GM12878 (cell line): ENCODE measurements at regions of chr14 and their contacts with region 1.

Region 1: DNA sequence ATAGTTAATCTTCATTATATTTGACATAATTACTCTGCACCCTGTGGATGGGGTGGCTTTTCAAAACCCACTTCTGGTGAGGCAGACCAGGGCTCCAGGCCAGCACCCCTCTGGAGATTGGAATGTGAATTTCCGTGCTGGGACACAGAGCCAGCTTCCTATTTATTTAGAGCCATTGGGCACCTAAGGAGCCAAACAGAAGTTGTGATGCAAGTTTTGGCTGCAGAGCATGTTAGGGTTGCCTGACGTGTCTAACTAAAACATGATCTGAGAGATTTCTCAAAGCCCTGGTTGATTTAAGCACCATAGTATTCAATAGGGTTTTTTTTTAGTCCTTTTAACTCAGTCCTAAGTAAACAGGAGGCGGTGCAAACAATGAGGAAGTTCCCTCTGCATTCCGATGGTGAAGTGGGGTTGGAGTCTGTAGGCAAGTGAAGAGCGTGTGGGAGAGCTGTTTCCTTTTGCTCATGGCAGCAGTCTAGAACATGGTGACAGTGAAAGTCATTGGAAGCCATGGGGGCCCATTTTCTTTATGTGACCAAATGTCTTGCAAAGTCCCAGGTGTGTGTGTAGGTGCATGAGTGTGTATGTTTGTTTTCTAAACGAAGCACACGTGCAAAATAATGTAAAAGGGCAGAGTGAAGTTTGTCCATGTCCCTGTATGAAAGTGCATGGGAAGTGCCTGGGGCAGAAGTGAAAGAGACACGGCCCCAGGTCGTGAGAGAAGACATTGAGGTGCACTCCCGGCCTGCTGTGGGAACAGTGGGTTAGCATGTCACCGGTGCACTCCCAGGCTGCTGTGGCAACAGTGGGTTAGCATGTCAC is 117.7 kb downstream of the PRKCH start:
- DNase-seq: peak; percentile 90
- ATAC-seq: peak; percentile 74
- H3K4me3 ChIP-seq: peak overlapping the region; percentile 54
- H3K27ac ChIP-seq: peak overlapping the region; percentile 93
- H3K4me1 ChIP-seq: peaks cover 39% of the 10 kb centered on the region
- H3K27me3 ChIP-seq: no peaks in the 10 kb centered on the region
- CTCF ChIP-seq: no peak
- EP300 ChIP-seq: peak in 1 of 2 experiments; percentile 59; a peak in 1 of 4 replicates
- POLR2A ChIP-seq: no peak; the same call in 1 of the 2 replicates
- RAD21 ChIP-seq: 0 out of 2 replicates have a peak, but pooled peaks have one; percentile 0

Region 2: DNA sequence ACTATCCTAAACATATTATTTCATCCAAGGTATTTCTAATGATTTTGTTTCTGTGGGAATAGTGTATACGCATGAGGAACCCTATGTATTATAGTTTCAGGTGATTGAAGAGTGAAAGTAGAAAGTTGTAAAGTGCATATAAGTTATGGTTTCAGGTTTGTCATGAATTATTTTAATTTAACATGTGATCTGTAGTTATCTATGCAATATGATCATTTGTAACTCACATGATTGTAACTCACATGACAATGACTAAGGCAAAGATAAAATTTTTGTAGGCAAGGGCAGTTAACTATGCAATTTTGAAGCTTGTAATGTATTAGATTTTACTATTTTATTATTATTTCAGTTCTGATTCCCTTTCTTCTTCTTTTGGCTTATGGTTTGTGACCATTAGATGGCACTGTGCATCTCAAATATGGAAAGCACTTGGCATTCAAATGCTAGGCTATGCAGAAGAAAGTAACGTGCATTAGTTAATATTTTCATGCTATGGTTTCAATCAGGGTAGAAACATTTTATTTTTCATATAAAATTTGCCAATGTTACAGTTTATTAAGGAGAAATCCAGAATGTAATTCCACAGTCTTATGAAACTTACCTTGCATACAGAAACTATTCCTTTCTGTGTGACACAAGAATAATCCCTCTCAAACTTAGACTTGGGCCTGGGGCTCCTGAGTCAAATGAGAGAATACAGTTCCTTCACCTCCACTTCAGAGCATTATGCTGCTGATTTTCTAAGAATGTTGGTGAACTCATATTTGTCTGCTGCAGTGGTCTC is 142.2 kb before region 1 on chr14:
- CTCF ChIA-PET with region 1: no interaction called
- POLR2A ChIA-PET with region 1: no interaction called
- RAD21 ChIA-PET with region 1: interaction called, 7 read pairs
- SMC1A ChIA-PET with region 1: interaction called, 3 read pairs
- in situ Hi-C with region 1: loop called (anchors 25 kb)
- intact Hi-C with region 1: loop called (anchors 1 kb)
- DNase-seq: peak; percentile 23
- ATAC-seq: peak; percentile 89
- H3K4me3 ChIP-seq: no peak overlapping the region
- H3K27ac ChIP-seq: no peak overlapping the region
- H3K4me1 ChIP-seq: peaks cover 12% of the 10 kb centered on the region
- H3K27me3 ChIP-seq: no peaks in the 10 kb centered on the region
- CTCF ChIP-seq: peak; percentile 50 to 66 (median 65)
- EP300 ChIP-seq: no peak
- POLR2A ChIP-seq: no peak
- RAD21 ChIP-seq: peak; percentile 89

Region 3: DNA sequence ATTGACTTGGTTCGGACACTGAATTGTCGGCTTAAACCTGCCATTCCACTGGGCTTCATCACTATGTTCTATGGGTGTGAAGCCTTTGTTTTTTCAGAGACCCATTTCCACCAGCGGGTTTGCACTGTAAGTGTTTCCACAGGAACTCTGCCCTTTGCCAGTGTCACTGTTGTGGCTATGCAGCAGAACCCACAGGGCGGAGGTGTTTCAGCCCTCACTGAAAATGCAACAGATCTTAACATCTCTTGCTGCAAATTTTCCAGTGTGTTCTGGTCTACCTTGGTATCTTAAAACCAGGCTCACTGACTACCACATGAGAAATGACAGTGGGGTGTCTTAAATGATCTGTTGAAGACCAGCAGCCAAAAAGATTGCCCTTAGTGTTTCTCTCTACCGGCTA is 96.6 kb before region 1 on chr14:
- CTCF ChIA-PET with region 1: no interaction called
- POLR2A ChIA-PET with region 1: no interaction called
- RAD21 ChIA-PET with region 1: interaction called, 16 read pairs
- SMC1A ChIA-PET with region 1: interaction called, 66 read pairs
- in situ Hi-C with region 1: no loop called
- intact Hi-C with region 1: loop called (anchors 5 kb)
- DNase-seq: peak; percentile 67
- ATAC-seq: peak; percentile 70
- H3K4me3 ChIP-seq: peak overlapping the region; percentile 57
- H3K27ac ChIP-seq: peak overlapping the region; percentile 74
- H3K4me1 ChIP-seq: peaks cover 63% of the 10 kb centered on the region
- H3K27me3 ChIP-seq: no peaks in the 10 kb centered on the region
- CTCF ChIP-seq: no peak
- EP300 ChIP-seq: peak; percentile 32 to 44; a peak in 1 of 4 replicates
- POLR2A ChIP-seq: no peak
- RAD21 ChIP-seq: no peak

Region 4: GRCh38 chr14:61388173-61388975 is 50.7 kb before region 1 on chr14:
- CTCF ChIA-PET with region 1: interaction called, 3 read pairs
- POLR2A ChIA-PET with region 1: interaction called, 66 read pairs
- RAD21 ChIA-PET with region 1: interaction called, 87 read pairs
- SMC1A ChIA-PET with region 1: interaction called, 60 read pairs
- in situ Hi-C with region 1: no loop called
- intact Hi-C with region 1: loop called (anchors 1 kb)
- DNase-seq: peak; percentile 86
- ATAC-seq: peak; percentile 74
- H3K4me3 ChIP-seq: peak overlapping the region; percentile 24; the same call in 1 of the 2 replicates
- H3K27ac ChIP-seq: peak overlapping the region; percentile 99
- H3K4me1 ChIP-seq: peaks cover 76% of the 10 kb centered on the region
- H3K27me3 ChIP-seq: no peaks in the 10 kb centered on the region
- CTCF ChIP-seq: no peak
- EP300 ChIP-seq: peak; percentile 90 to 93
- POLR2A ChIP-seq: peak; percentile 63
- RAD21 ChIP-seq: no peak

Region 5: DNA sequence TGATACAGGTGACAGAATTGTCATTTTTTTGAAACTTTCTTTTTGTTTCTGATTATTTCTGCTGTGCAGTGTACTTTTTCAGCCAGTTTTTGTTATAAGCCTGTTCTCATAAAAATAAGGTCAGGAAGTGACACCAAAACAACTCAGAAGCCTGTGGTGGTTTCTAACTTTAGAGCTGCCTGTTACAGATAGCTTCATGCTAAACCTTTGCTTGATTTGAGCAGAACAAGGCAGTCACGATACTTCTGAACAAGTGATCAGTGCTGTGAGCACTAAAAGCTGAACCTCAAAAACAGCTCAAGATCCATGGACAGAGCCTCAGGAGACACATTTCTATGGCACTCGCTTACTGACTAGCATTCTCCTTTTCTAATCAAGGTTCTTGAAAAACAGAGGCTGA is 35.7 kb before region 1 on chr14:
- CTCF ChIA-PET with region 1: interaction called, 4 read pairs
- POLR2A ChIA-PET with region 1: interaction called, 5 read pairs
- RAD21 ChIA-PET with region 1: interaction called, 11 read pairs
- SMC1A ChIA-PET with region 1: interaction called, 53 read pairs
- in situ Hi-C with region 1: no loop called
- intact Hi-C with region 1: no loop called
- DNase-seq: peak; percentile 61
- ATAC-seq: peak; percentile 86
- H3K4me3 ChIP-seq: no peak overlapping the region
- H3K27ac ChIP-seq: peak overlapping the region; percentile 89
- H3K4me1 ChIP-seq: peaks cover 17% of the 10 kb centered on the region
- H3K27me3 ChIP-seq: no peaks in the 10 kb centered on the region
- CTCF ChIP-seq: no peak
- EP300 ChIP-seq: no peak
- POLR2A ChIP-seq: peak; percentile 35; the same call in 1 of the 2 replicates
- RAD21 ChIP-seq: no peak